ENCODE measurements at regions of chr9 and their contacts with region 1.

Region 1: DNA sequence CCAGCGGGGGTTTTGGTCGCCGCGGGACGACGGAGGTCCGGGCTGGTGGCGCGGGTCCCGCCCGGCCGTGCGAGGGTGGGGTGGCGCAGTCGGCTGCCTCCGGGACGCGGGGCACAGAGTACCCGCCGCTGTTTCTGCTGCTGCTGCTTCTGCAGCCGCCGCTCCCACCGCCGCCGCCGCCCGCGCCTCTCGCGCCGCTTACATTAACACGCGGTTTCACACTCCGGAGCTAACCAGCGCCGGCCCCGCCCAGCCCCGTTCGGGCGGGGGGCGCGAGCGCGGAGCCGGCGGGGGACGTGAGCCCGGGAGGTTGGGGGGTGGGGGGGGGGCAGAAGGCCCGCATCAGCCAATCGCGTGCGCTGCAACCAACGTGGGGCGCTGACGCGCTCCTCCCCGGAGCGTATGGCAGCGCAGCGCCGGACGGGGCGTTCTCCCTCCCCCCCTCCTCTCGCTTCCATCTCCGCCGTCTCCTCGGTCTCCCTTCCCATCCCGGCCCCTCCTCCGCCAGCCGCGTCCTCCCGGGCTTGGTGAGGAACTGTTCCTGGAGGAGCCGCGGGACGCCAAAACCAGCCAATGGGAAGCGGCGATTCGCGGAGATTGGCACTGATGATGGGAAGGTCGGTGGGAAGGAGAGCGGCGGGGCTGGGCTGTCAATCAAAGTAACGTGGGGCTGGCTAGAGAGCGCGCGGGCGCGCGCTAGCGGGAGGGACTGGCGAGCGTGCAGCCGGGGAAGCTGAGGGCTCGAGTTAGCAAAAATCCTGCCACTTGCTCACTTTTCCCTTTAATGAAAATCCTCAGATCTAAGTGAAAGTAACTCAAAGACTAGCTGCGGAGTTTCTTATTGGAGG is at the start of gene TLE1:
- DNase-seq: peak; percentile 99 to 100
- H3K4me3 ChIP-seq: peak within 1 kb of the TSS; percentile 80 to 83
- H3K27ac ChIP-seq: peak within 1 kb of the TSS; percentile 96 to 97
- H3K4me1 ChIP-seq: peaks cover 0 to 11% of the 10 kb centered on the region in 2 donors
- H3K27me3 ChIP-seq: no peaks in the 10 kb centered on the region
- CTCF ChIP-seq: no peak
- total RNA-seq, gene TLE1: 58.5 TPM

Region 2: DNA sequence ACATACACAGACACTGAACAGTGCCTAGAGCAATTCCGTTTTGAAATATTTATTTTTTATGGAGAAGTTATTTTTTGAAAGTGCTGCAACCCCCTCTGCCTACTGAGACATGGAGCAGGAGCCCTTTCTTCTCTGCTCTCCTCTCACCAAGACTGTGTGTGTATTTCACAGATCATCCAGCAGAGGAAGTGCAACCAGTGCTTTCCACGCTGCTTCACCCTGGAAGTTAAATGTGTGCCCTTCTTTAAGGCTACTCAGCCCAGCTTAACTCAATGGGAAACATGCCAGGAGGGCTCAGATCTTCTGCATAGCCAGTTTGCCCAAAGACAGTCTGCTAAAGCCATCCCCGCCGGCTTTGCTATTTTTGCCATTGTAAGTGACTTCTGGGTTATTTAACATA is 606.5 kb before region 1 on chr9:
- intact Hi-C with region 1: loop called (anchors 10 kb)
- DNase-seq: no peak
- H3K4me3 ChIP-seq: no peak overlapping the region
- H3K27ac ChIP-seq: no peak overlapping the region
- H3K4me1 ChIP-seq: peaks cover 0 to 16% of the 10 kb centered on the region in 2 donors
- H3K27me3 ChIP-seq: no peaks in the 10 kb centered on the region
- CTCF ChIP-seq: peak in 2 of 3 experiments; percentile 13 to 14

Region 3: DNA sequence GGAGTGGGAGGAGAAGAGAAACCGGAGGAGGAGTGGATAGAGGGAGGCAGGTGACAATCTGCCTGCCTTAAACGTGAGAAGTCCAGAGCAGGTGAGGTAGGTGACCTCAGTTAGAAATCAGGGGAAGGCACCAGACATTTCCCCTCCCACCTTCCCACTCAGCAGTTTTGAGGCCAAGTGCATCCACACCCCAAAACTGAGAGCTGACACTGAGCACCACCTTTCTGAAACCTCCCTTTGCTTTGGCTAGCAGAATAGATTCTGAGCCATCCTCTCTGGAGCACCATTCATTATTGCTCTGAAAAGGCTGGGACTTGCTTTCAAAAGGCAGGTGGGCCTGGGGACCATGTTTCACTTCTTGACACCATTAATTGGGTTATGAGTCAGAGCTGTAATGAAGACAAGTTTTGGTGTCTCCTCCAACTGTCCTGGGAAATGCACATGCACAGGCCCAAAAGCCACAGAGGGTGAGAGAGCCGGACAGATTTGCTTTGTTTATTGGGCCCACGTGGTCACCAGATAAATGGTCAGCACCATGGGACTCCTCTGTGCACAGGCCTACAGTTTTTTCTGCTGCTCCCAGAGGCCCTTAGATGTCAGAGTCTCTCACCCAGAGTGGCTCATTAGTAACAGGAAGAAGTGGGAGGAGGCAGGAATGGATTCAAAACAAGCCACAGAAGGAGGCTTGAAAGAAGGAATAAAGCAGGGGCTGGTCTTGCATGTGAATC is 314.9 kb before region 1 on chr9:
- intact Hi-C with region 1: loop called (anchors 10 kb)
- DNase-seq: no peak
- H3K4me3 ChIP-seq: no peak overlapping the region
- H3K27ac ChIP-seq: no peak overlapping the region
- H3K4me1 ChIP-seq: peaks cover 0 to 10% of the 10 kb centered on the region in 2 donors
- H3K27me3 ChIP-seq: no peaks in the 10 kb centered on the region
- CTCF ChIP-seq: no peak

Region 4: DNA sequence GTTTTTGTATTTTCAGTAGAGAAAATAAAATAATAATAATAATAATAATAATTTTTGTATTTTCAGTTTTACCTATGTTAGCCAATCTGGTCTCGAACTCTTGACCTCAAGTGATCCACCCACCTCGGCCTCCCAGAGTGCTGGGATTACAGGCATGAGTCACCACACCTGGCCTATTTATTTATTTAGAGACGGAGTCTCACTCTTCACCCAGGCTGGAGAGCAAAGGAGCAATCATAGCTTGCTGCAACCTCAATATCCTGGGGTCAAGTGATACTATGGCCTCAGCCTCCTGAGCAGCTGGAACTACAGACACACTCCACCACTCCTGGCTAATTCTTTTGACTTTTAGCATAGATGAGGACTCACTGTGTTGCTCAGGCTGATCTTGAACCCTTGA is 167.7 kb before region 1 on chr9:
- intact Hi-C with region 1: loop called (anchors 2 kb)
- DNase-seq: no peak
- H3K4me3 ChIP-seq: no peak overlapping the region
- H3K27ac ChIP-seq: no peak overlapping the region
- H3K4me1 ChIP-seq: no peaks in the 10 kb centered on the region
- H3K27me3 ChIP-seq: no peaks in the 10 kb centered on the region
- CTCF ChIP-seq: no peak

Region 5: GRCh38 chr9:81609782-81610739 is 79.5 kb before region 1 on chr9:
- intact Hi-C with region 1: loop called (anchors 5 kb)
- DNase-seq: no peak
- H3K4me3 ChIP-seq: no peak overlapping the region
- H3K27ac ChIP-seq: peak overlapping the region; percentile 50 to 91
- H3K4me1 ChIP-seq: peaks cover 3 to 15% of the 10 kb centered on the region in 2 donors
- H3K27me3 ChIP-seq: no peaks in the 10 kb centered on the region
- CTCF ChIP-seq: no peak

Region 6: GRCh38 chr9:81737853-81738507 is 48.4 kb after region 1 on chr9:
- intact Hi-C with region 1: loop called (anchors 2 kb)
- DNase-seq: peak; percentile 41 to 88
- H3K4me3 ChIP-seq: no peak overlapping the region
- H3K27ac ChIP-seq: peak overlapping the region in 1 of 2 donors; percentile 52
- H3K4me1 ChIP-seq: peaks cover 0 to 6% of the 10 kb centered on the region in 2 donors
- H3K27me3 ChIP-seq: no peaks in the 10 kb centered on the region
- CTCF ChIP-seq: no peak

Region 7: GRCh38 chr9:81848472-81848871 is 158.9 kb after region 1 on chr9:
- intact Hi-C with region 1: loop called (anchors 1 kb)
- DNase-seq: no peak
- H3K4me3 ChIP-seq: no peak overlapping the region
- H3K27ac ChIP-seq: no peak overlapping the region
- H3K4me1 ChIP-seq: no peaks in the 10 kb centered on the region
- H3K27me3 ChIP-seq: no peaks in the 10 kb centered on the region
- CTCF ChIP-seq: peak in 2 of 3 experiments; percentile 33 to 66